MCF 10A (cell line): ENCODE measurements at regions of chr6 and their contacts with region 1.

Region 1: GRCh38 chr6:42901536-42901957 is 14.3 kb upstream of the PTCRA start:
- DNase-seq: peak; percentile 92
- H3K4me3 Mint-ChIP-seq: no peak overlapping the region
- H3K27ac Mint-ChIP-seq: no peak overlapping the region
- H3K4me1 Mint-ChIP-seq: peaks cover 14% of the 10 kb centered on the region
- H3K27me3 Mint-ChIP-seq: no peaks in the 10 kb centered on the region
- CTCF ChIP-seq: peak; percentile 89

Region 2: DNA sequence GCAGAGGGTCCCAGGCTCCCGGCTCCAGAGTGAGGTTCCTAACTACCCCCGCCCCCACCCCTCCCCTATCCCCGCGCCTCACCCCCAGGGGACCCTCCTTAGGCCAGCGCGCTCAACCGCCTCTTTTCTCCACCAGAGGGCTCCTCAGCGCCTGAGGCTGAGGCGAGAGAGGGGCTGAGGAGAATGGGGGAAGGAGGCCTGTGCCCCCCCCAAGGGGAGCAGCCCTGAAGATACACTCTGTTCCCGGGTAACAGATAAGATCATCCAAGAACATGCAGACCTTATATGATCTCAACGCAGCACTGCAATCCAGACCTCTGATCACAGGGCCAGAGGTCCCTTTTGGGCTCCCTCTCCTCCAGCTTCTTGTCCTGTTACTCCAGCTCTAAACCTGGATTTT is 640.6 kb before region 1 on chr6:
- CTCF ChIA-PET with region 1: no interaction called
- POLR2A ChIA-PET with region 1: no interaction called
- intact Hi-C with region 1: no loop called
- DNase-seq: peak; percentile 26
- H3K4me3 Mint-ChIP-seq: no peak overlapping the region
- H3K27ac Mint-ChIP-seq: peak overlapping the region; percentile 70
- H3K4me1 Mint-ChIP-seq: peaks cover 9% of the 10 kb centered on the region
- H3K27me3 Mint-ChIP-seq: no peaks in the 10 kb centered on the region
- CTCF ChIP-seq: peak; percentile 70

Region 3: DNA sequence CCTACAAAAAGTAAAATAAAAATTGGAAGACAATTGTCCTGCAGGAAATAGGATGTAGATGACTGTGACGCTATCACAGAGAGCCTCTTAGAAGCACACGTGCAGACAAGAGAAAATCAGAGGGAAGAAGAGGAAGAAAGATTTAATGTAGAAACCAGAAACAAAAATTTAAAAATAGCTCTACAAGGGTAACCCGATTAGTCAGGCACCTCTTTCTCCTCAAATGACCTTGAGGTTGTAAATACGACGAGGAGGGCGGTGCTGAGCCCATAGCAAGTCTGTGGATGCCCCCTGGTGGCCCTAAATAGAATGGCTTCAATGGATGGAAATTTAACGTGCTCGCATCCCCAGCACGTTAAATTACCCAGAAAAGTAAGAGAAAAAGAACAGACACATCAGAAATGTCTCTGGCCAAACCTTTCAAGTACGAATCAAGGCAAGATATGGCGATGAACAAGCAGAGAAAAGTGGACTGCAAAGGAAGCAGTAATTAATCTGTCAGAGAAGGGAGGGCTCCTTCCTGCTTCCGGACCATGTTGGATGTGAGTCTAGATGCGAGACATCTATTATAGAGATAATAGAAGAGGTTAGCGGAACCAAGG is 175.0 kb before region 1 on chr6:
- CTCF ChIA-PET with region 1: interaction called, 6 read pairs
- POLR2A ChIA-PET with region 1: no interaction called
- intact Hi-C with region 1: loop called (anchors 2 kb)
- DNase-seq: peak; percentile 87
- H3K4me3 Mint-ChIP-seq: peak overlapping the region; percentile 11
- H3K27ac Mint-ChIP-seq: no peak overlapping the region
- H3K4me1 Mint-ChIP-seq: no peaks in the 10 kb centered on the region
- H3K27me3 Mint-ChIP-seq: peaks cover 5% of the 10 kb centered on the region
- CTCF ChIP-seq: peak; percentile 74

Region 4: GRCh38 chr6:42963855-42964605 is 62.5 kb after region 1 on chr6:
- CTCF ChIA-PET with region 1: interaction called, 10 read pairs
- POLR2A ChIA-PET with region 1: no interaction called
- intact Hi-C with region 1: no loop called
- DNase-seq: peak; percentile 61
- H3K4me3 Mint-ChIP-seq: no peak overlapping the region
- H3K27ac Mint-ChIP-seq: no peak overlapping the region
- H3K4me1 Mint-ChIP-seq: peaks cover 7% of the 10 kb centered on the region
- H3K27me3 Mint-ChIP-seq: no peaks in the 10 kb centered on the region
- CTCF ChIP-seq: no peak

Region 5: DNA sequence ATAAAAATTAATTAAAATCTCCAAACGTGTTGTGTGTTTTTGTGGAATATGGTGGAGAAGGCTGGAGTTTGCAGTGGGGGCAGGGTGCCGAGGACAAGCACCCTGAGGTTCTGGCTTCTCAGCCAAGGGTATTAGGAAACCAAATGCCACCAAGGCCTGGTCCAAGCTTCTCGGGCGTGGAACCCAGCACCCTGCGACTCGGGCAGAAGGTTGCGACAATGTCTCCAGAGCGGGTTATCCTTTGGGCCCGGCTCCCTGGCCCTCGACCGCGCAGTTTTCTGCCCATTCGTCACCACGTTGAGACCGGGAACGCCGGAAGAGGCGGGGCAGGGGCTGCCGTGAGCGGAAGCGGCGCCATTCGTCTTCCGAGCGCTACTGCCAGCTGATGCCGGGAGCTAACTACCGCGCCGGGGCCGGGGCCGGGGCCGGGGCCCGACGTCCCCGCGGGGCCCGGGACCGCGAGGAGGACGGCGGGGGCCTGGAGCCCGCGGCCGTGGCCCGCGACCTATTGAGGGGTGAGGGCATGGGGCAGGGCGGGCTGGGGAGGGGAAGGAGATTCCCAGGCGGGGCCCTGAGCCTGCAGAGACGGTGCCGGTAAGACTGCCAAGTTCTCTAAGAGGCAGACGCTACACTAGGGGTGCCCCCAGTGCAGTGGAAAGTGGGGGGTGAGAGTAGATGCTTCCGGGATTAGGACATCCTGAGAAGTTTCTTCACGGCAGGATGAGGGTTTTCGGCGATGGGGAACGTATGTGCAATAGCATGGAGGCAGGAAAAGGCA is 119.9 kb after region 1 on chr6 and contains the start of gene RRP36:
- CTCF ChIA-PET with region 1: interaction called, 5 read pairs
- POLR2A ChIA-PET with region 1: no interaction called
- intact Hi-C with region 1: loop called (anchors 1 kb)
- DNase-seq: peak; percentile 68
- H3K4me3 Mint-ChIP-seq: peak within 1 kb of the TSS; percentile 92
- H3K27ac Mint-ChIP-seq: peak within 1 kb of the TSS; percentile 57
- H3K4me1 Mint-ChIP-seq: peaks cover 9% of the 10 kb centered on the region
- H3K27me3 Mint-ChIP-seq: no peaks in the 10 kb centered on the region
- CTCF ChIP-seq: no peak
- total RNA-seq, gene RRP36: 72.8 and 80.4 TPM in 2 replicates

Region 6: GRCh38 chr6:43143235-43144124 is 241.9 kb after region 1 on chr6:
- CTCF ChIA-PET with region 1: interaction called, 6 read pairs
- POLR2A ChIA-PET with region 1: no interaction called
- intact Hi-C with region 1: loop called (anchors 1 kb)
- DNase-seq: peak; percentile 80
- H3K4me3 Mint-ChIP-seq: no peak overlapping the region
- H3K27ac Mint-ChIP-seq: no peak overlapping the region
- H3K4me1 Mint-ChIP-seq: peaks cover 18% of the 10 kb centered on the region
- H3K27me3 Mint-ChIP-seq: no peaks in the 10 kb centered on the region
- CTCF ChIP-seq: peak; percentile 94

Region 7: GRCh38 chr6:43977404-43978111 is 1076.0 kb after region 1 on chr6:
- CTCF ChIA-PET with region 1: no interaction called
- POLR2A ChIA-PET with region 1: no interaction called
- intact Hi-C with region 1: no loop called
- DNase-seq: no peak
- H3K4me3 Mint-ChIP-seq: no peak overlapping the region
- H3K27ac Mint-ChIP-seq: no peak overlapping the region
- H3K4me1 Mint-ChIP-seq: peaks cover 32% of the 10 kb centered on the region
- H3K27me3 Mint-ChIP-seq: no peaks in the 10 kb centered on the region
- CTCF ChIP-seq: no peak